K562 (cell line): ENCODE measurements at regions of chr1 and their contacts with region 1.

Region 1: GRCh38 chr1:45011837-45012638 is at the start of gene UROD:
- DNase-seq: peak; percentile 95 to 100 (median 96)
- ATAC-seq: peak; percentile 73
- H3K4me3 ChIP-seq: peak within 1 kb of the TSS; percentile 86
- H3K27ac ChIP-seq: peak within 1 kb of the TSS; percentile 85
- H3K4me1 ChIP-seq: peaks cover 44 to 45% of the 10 kb centered on the region in 2 experiments
- H3K27me3 ChIP-seq: no peaks in the 10 kb centered on the region
- CTCF ChIP-seq: no peak
- EP300 ChIP-seq: peak; percentile 72; the same call in 1 of the 2 replicates
- POLR2A ChIP-seq: peak; percentile 98
- RAD21 ChIP-seq: peak in 1 of 2 experiments; percentile 5; a peak in 1 of 4 replicates
- polyA plus RNA-seq, gene UROD: 2,545 to 2,933 TPM

Region 2: GRCh38 chr1:44730741-44731512 is 281.1 kb before region 1 on chr1 and contains the start of gene RNU5D-1:
- CTCF ChIA-PET with region 1: interaction called, 3 read pairs
- POLR2A ChIA-PET with region 1: interaction called, 6 read pairs
- in situ Hi-C with region 1: no loop called
- intact Hi-C with region 1: loop called (anchors 1 kb)
- DNase-seq: peak; percentile 87 to 99 (median 90)
- ATAC-seq: peak; percentile 87
- H3K4me3 ChIP-seq: 0 out of 2 replicates have a peak within 1 kb of the TSS, but pooled peaks have one; percentile 3
- H3K27ac ChIP-seq: peak within 1 kb of the TSS; percentile 100
- H3K4me1 ChIP-seq: peaks cover 11 to 16% of the 10 kb centered on the region in 2 experiments
- H3K27me3 ChIP-seq: no peaks in the 10 kb centered on the region
- CTCF ChIP-seq: peak; percentile 79 to 97 (median 93)
- EP300 ChIP-seq: peak; percentile 80
- POLR2A ChIP-seq: peak; percentile 100
- RAD21 ChIP-seq: peak; percentile 4 to 54
- polyA plus RNA-seq, gene RNU5D-1: not detected

Region 3: GRCh38 chr1:44799770-44800584 is 212.1 kb before region 1 on chr1 and contains the start of gene PLK3:
- CTCF ChIA-PET with region 1: no interaction called
- POLR2A ChIA-PET with region 1: interaction called, 11 read pairs
- in situ Hi-C with region 1: no loop called
- intact Hi-C with region 1: no loop called
- DNase-seq: peak; percentile 92 to 99 (median 96)
- ATAC-seq: peak; percentile 93
- H3K4me3 ChIP-seq: peak within 1 kb of the TSS; percentile 77
- H3K27ac ChIP-seq: peak within 1 kb of the TSS; percentile 69
- H3K4me1 ChIP-seq: peaks cover 23 to 53% of the 10 kb centered on the region in 2 experiments
- H3K27me3 ChIP-seq: no peaks in the 10 kb centered on the region; a peak in 1 of 5 replicates
- CTCF ChIP-seq: peak; percentile 94 to 96 (median 95)
- EP300 ChIP-seq: no peak; the same call in 1 of the 2 replicates
- POLR2A ChIP-seq: peak; percentile 91
- RAD21 ChIP-seq: peak; percentile 91 to 96
- polyA plus RNA-seq, gene PLK3: 0.52 to 1.9 TPM

Region 4: GRCh38 chr1:44867801-44868200 is 144.2 kb before region 1 on chr1:
- CTCF ChIA-PET with region 1: no interaction called
- POLR2A ChIA-PET with region 1: no interaction called
- in situ Hi-C with region 1: no loop called
- intact Hi-C with region 1: no loop called
- DNase-seq: no peak
- ATAC-seq: no peak
- H3K4me3 ChIP-seq: no peak overlapping the region
- H3K27ac ChIP-seq: no peak overlapping the region
- H3K4me1 ChIP-seq: peaks cover 0 to 8% of the 10 kb centered on the region in 2 experiments; a peak in 2 of 5 replicates
- H3K27me3 ChIP-seq: no peaks in the 10 kb centered on the region
- CTCF ChIP-seq: no peak
- EP300 ChIP-seq: no peak
- POLR2A ChIP-seq: no peak
- RAD21 ChIP-seq: no peak

Region 5: DNA sequence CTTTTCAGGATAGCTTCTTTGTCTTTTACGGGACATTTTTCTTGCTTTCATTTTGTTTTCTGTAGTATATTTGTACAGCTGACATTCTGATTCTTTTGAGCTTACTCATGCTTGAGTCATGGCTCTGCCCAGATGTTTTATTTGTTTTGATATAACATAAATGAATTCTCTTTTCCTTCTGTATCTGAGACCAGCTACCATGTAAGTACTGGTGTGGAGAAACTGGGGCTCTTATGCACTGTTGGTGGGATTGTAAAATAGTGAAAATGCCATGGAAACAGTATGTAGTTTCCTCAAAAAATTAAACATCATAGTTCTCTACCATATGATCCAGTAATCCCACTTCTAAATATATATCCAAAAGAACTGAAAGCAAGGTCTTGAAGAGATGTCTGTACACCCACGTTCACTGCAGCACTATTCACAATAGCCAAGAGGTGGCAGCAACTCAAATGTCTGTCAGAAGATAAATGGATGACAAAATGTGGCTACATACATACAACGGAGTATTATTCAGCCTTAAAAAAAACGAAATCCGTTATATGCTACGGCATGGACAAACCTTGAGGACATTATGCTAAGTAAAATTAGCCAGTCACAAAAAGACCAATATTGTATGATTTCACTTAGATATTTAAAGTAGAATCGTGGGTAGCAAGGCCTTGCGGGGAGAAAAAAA is 87.1 kb before region 1 on chr1:
- CTCF ChIA-PET with region 1: no interaction called
- POLR2A ChIA-PET with region 1: no interaction called
- in situ Hi-C with region 1: no loop called
- intact Hi-C with region 1: loop called (anchors 5 kb)
- DNase-seq: peak in 1 of 4 experiments; percentile 41
- ATAC-seq: peak; percentile 86
- H3K4me3 ChIP-seq: no peak overlapping the region
- H3K27ac ChIP-seq: no peak overlapping the region
- H3K4me1 ChIP-seq: no peaks in the 10 kb centered on the region
- H3K27me3 ChIP-seq: no peaks in the 10 kb centered on the region
- CTCF ChIP-seq: peak; percentile 29 to 66 (median 62); a peak in 4 of 6 replicates
- EP300 ChIP-seq: no peak
- POLR2A ChIP-seq: no peak
- RAD21 ChIP-seq: peak in 1 of 2 experiments; percentile 51; a peak in 3 of 4 replicates

Region 6: DNA sequence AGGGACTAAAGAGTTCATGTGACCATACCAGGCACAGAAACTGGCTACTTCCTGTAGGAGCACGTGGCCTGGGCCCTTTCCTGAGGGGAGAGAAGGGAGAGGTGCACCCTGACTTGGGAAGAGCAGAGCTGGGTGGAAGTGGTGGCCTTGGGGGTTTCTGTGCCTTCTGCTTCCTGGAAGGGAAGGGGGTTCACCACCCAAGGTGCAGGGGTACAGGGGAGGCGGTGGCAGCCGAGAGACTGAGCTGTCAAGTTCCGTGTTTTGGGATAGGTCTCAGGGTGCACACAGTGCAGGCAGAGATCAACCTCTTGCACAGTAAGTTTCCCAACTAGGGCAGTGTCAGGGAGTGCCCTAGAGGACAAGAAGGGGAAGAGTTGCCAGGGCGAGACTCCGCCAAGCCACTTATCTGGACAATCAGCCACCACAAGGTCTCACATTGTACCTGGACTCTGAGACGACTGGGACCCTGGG is 11.0 kb before region 1 on chr1:
- CTCF ChIA-PET with region 1: no interaction called
- POLR2A ChIA-PET with region 1: interaction called, 26 read pairs
- in situ Hi-C with region 1: no loop called
- intact Hi-C with region 1: no loop called
- DNase-seq: peak in 1 of 4 experiments; percentile 26
- ATAC-seq: peak; percentile 66
- H3K4me3 ChIP-seq: no peak overlapping the region
- H3K27ac ChIP-seq: 0 out of 3 replicates have a peak overlapping the region, but pooled peaks have one; percentile 1
- H3K4me1 ChIP-seq: no peaks in the 10 kb centered on the region; a peak in 1 of 5 replicates
- H3K27me3 ChIP-seq: no peaks in the 10 kb centered on the region
- CTCF ChIP-seq: no peak
- EP300 ChIP-seq: no peak
- POLR2A ChIP-seq: no peak
- RAD21 ChIP-seq: no peak

Region 7: DNA sequence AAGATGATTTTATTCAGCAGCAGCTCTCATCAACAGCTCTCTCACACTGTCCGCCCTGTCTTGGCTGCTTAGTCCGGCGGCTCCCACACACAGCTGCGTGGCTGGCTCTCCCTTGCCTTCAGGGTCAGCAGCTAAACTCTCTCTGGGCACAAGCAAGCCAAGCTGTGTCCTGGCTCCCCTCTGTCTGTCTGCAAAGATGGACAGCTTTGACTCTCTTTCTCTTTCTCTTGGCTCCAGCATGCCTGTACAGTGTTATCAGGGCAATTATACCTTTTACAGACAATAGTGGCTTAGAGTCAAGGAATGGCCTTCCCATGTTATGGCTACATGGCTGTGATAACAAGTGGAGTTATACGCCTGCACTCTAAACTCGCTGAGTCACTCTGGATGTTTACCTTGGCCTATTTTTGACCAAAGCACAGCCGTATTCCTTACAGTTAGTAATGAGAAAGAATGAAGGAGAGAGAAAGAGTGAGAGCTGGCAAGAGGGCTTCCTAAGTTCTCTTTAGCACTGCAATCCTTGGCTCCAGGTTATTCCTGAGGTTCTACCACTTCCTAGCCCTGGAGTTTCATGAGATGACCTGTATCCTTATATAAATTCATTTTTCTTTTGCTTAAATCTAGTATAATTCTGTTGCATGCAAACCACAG is 254.2 kb after region 1 on chr1:
- CTCF ChIA-PET with region 1: no interaction called
- POLR2A ChIA-PET with region 1: interaction called, 10 read pairs
- in situ Hi-C with region 1: no loop called
- intact Hi-C with region 1: no loop called
- DNase-seq: peak in 3 of 4 experiments; percentile 17 to 89 (median 44)
- ATAC-seq: peak; percentile 92
- H3K4me3 ChIP-seq: peak overlapping the region; percentile 8; the same call in 1 of the 2 replicates
- H3K27ac ChIP-seq: peak overlapping the region; percentile 71
- H3K4me1 ChIP-seq: peaks cover 8 to 27% of the 10 kb centered on the region in 2 experiments
- H3K27me3 ChIP-seq: peaks cover 0 to 12% of the 10 kb centered on the region in 2 experiments; a peak in 1 of 5 replicates
- CTCF ChIP-seq: no peak
- EP300 ChIP-seq: peak; percentile 83
- POLR2A ChIP-seq: no peak
- RAD21 ChIP-seq: peak; percentile 8 to 38; a peak in 2 of 4 replicates

Region 8: DNA sequence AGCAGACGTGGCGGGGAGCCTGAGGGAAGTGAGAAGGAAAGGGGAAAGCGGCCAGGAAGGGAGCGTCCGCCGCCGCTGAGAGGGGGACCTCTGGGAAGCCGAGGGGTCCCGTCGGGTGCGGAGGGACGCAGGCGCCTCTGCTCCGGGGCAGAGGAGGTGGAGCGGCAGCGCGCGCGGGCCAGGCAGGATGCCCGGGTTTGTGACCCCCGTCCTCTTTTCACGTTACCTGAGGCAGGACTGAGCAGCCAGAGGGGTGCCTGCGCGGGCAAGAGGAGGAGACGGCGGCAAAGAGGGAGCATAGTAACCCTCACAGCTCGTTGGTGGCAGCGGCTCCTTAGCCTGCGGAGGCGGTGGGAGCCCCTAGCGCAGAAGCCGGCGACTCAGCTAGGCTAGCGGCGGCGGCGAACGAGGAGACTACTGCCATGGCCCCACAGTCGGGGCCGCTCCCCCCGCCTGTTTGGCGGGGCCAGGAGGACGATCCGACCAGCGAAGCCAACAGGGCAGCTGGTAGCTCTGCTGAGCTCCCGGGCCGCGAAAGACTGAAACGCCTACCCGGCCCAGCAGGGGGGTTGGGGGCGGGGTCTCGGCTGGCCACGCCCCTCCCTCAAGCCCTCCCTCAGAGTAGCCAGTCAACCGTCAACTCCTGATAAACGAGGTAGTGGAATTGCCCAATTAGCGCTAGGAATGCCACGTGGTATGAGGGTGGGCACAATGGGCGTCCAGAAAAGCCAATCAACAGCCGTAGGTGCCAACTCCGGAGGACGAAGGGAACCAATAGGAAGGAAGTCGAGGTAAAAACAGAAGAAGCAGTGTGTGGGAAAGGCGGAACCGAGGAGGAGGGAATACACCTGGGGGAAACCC is 478.8 kb after region 1 on chr1 and contains the start of gene TESK2:
- CTCF ChIA-PET with region 1: interaction called, 22 read pairs
- POLR2A ChIA-PET with region 1: interaction called, 4 read pairs
- in situ Hi-C with region 1: loop called (anchors 5 kb)
- intact Hi-C with region 1: no loop called
- DNase-seq: peak; percentile 89 to 95 (median 92)
- ATAC-seq: peak; percentile 93
- H3K4me3 ChIP-seq: peak within 1 kb of the TSS; percentile 57
- H3K27ac ChIP-seq: peak within 1 kb of the TSS; percentile 52
- H3K4me1 ChIP-seq: peaks cover 9 to 20% of the 10 kb centered on the region in 2 experiments; a peak in 4 of 5 replicates
- H3K27me3 ChIP-seq: no peaks in the 10 kb centered on the region
- CTCF ChIP-seq: 0 out of 6 replicates have a peak, but pooled peaks of 2 of the 3 experiments have one; percentile 5
- EP300 ChIP-seq: no peak
- POLR2A ChIP-seq: peak; percentile 72
- RAD21 ChIP-seq: 0 out of 4 replicates have a peak, but pooled peaks of 1 of the 2 experiments have one; percentile 7
- polyA plus RNA-seq, gene TESK2: 1.6 to 1.9 TPM